ENCODE measurements at regions of chr16 and their contacts with region 1.

Region 1: GRCh38 chr16:106623-107324 is 28.7 kb downstream of the MPG start:
- DNase-seq: peak; percentile 68
- ATAC-seq: peak; percentile 90
- H3K4me3 Mint-ChIP-seq: no peak overlapping the region
- H3K27ac Mint-ChIP-seq: no peak overlapping the region
- H3K4me1 Mint-ChIP-seq: peaks cover 3% of the 10 kb centered on the region
- H3K27me3 Mint-ChIP-seq: no peaks in the 10 kb centered on the region
- CTCF ChIP-seq: peak; percentile 68

Region 2: GRCh38 chr16:117379-118365 is 10.9 kb after region 1 on chr16:
- CTCF ChIA-PET with region 1: interaction called, 49 read pairs
- POLR2A ChIA-PET with region 1: no interaction called
- intact Hi-C with region 1: no loop called
- DNase-seq: peak; percentile 72
- ATAC-seq: peak; percentile 87
- H3K4me3 Mint-ChIP-seq: no peak overlapping the region
- H3K27ac Mint-ChIP-seq: no peak overlapping the region
- H3K4me1 Mint-ChIP-seq: peaks cover 8% of the 10 kb centered on the region
- H3K27me3 Mint-ChIP-seq: no peaks in the 10 kb centered on the region
- CTCF ChIP-seq: peak; percentile 74

Region 3: DNA sequence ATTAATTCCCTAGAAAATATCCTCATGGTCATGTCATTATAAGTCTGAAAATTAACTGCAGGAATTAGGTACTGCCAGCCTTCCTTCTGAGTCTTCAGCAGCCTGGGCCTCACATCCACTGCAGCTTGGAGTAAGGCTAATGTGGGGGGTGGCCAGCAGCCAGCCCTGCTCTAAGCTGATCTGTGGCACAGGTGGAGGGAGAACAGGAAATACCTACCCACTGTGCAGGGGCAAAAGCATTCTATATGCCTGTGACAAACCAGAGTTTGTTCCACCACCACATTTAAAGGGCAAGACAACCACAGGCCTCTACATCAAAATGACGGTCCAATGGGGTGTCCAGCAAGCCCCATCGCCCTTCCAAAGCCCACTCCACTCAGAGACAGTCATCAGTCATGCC is 22.3 kb after region 1 on chr16:
- CTCF ChIA-PET with region 1: interaction called, 27 read pairs
- POLR2A ChIA-PET with region 1: no interaction called
- intact Hi-C with region 1: no loop called
- DNase-seq: peak; percentile 26
- ATAC-seq: peak; percentile 74
- H3K4me3 Mint-ChIP-seq: no peak overlapping the region
- H3K27ac Mint-ChIP-seq: peak overlapping the region; percentile 3
- H3K4me1 Mint-ChIP-seq: peaks cover 31% of the 10 kb centered on the region
- H3K27me3 Mint-ChIP-seq: no peaks in the 10 kb centered on the region
- CTCF ChIP-seq: no peak

Region 4: GRCh38 chr16:180938-181667 is 74.3 kb after region 1 on chr16:
- CTCF ChIA-PET with region 1: interaction called, 32 read pairs
- POLR2A ChIA-PET with region 1: interaction called, 4 read pairs
- intact Hi-C with region 1: loop called (anchors 5 kb)
- DNase-seq: peak; percentile 91
- ATAC-seq: peak; percentile 88
- H3K4me3 Mint-ChIP-seq: peak overlapping the region; percentile 38
- H3K27ac Mint-ChIP-seq: no peak overlapping the region
- H3K4me1 Mint-ChIP-seq: peaks cover 4% of the 10 kb centered on the region
- H3K27me3 Mint-ChIP-seq: peaks cover 23% of the 10 kb centered on the region
- CTCF ChIP-seq: peak; percentile 98

Region 5: GRCh38 chr16:228818-229730 is 122.3 kb after region 1 on chr16 and contains the start of gene LUC7L:
- CTCF ChIA-PET with region 1: no interaction called
- POLR2A ChIA-PET with region 1: no interaction called
- intact Hi-C with region 1: no loop called
- DNase-seq: peak; percentile 93
- ATAC-seq: peak; percentile 93
- H3K4me3 Mint-ChIP-seq: peak within 1 kb of the TSS; percentile 92
- H3K27ac Mint-ChIP-seq: peak within 1 kb of the TSS; percentile 93
- H3K4me1 Mint-ChIP-seq: peaks cover 32% of the 10 kb centered on the region
- H3K27me3 Mint-ChIP-seq: no peaks in the 10 kb centered on the region
- CTCF ChIP-seq: no peak
- total RNA-seq, gene LUC7L: 68.0 to 72.8 TPM

Region 6: GRCh38 chr16:361872-362701 is 255.3 kb after region 1 on chr16:
- CTCF ChIA-PET with region 1: interaction called, 20 read pairs
- POLR2A ChIA-PET with region 1: no interaction called
- intact Hi-C with region 1: no loop called
- DNase-seq: peak; percentile 84
- ATAC-seq: peak; percentile 93
- H3K4me3 Mint-ChIP-seq: no peak overlapping the region
- H3K27ac Mint-ChIP-seq: no peak overlapping the region
- H3K4me1 Mint-ChIP-seq: peaks cover 6% of the 10 kb centered on the region
- H3K27me3 Mint-ChIP-seq: no peaks in the 10 kb centered on the region
- CTCF ChIP-seq: peak; percentile 86

Region 7: DNA sequence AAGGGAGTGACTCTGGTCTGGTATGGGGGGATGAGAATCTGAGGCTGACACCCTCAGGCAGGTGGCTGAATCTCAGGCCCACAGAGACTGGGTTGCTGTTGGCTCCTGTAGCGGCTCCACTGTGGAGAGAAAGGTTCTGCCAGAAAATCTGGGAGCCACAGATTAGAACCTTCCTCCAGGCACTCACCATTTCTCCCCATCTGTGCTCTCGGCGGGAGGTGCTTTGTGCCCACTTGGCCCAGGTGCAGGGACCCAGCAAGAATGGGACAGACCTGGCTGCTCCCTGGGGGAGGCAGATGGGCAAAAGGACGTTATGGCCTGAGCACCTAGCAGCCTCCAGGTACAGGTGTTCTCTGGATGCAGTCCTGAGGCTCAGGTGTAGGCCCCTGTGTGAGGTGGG is 338.8 kb after region 1 on chr16:
- CTCF ChIA-PET with region 1: no interaction called
- POLR2A ChIA-PET with region 1: no interaction called
- intact Hi-C with region 1: no loop called
- DNase-seq: no peak
- ATAC-seq: no peak
- H3K4me3 Mint-ChIP-seq: no peak overlapping the region
- H3K27ac Mint-ChIP-seq: no peak overlapping the region
- H3K4me1 Mint-ChIP-seq: no peaks in the 10 kb centered on the region
- H3K27me3 Mint-ChIP-seq: no peaks in the 10 kb centered on the region
- CTCF ChIP-seq: no peak